ENCODE measurements at regions of chr3 and their contacts with region 1.

Region 1: DNA sequence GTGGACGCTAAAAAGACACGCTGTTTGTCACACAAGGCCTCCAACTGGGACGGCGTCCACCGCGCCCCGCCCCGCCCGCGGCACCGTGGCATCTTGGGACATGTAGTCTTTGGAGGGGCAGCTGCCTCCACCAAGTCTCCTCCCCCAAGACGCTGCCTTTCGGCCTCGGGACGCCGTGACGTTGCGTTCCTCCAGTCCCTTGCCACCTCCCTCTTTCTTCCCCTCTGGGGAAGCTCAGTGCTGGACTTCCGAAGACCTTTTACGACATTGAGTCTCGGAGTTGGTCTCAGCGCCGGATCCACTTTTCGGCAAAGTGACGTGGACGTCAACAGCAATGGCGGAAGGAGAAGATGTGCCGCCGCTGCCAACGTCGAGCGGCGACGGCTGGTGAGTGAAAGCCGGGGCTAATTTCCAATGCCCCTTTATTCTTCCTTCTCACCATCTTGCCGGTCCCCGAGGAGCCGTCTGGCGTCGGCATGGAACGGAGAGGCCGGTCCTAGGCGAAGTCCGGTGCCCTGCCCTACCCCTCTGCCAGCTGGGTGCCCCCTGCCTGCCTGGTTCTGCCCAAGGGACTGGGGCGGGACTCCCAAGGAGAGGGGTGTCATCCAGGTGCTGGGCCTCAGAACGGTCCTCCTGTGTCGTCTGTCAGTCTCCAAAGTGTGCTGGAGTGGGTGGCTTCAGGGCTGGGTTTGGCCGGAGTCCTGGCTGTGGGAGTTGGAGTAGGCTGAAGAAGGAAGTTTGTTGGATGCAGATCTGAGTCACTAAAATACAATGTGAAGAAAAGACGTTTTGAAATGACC is at the start of gene TBC1D23:
- DNase-seq: peak; percentile 94 to 98 (median 97)
- H3K4me3 ChIP-seq: peak within 1 kb of the TSS; percentile 88
- H3K4me3 Mint-ChIP-seq: peak within 1 kb of the TSS; percentile 89 to 96 (median 92)
- H3K27ac ChIP-seq: peak within 1 kb of the TSS; percentile 93
- H3K27ac Mint-ChIP-seq: peak within 1 kb of the TSS; percentile 94 to 100 (median 96)
- H3K4me1 ChIP-seq: peaks cover 26% of the 10 kb centered on the region
- H3K4me1 Mint-ChIP-seq: peaks cover 43 to 66% (median 60%) of the 10 kb centered on the region in 3 donors
- H3K27me3 ChIP-seq: no peaks in the 10 kb centered on the region
- H3K27me3 Mint-ChIP-seq: no peaks in the 10 kb centered on the region
- total RNA-seq, gene TBC1D23: 21.0 to 23.1 TPM

Region 2: GRCh38 chr3:100136921-100137320 is 124.0 kb before region 1 on chr3:
- CTCF ChIA-PET with region 1: no interaction called
- POLR2A ChIA-PET with region 1: no interaction called
- DNase-seq: no peak
- H3K4me3 ChIP-seq: no peak overlapping the region
- H3K4me3 Mint-ChIP-seq: no peak overlapping the region
- H3K27ac ChIP-seq: no peak overlapping the region
- H3K27ac Mint-ChIP-seq: no peak overlapping the region
- H3K4me1 ChIP-seq: no peaks in the 10 kb centered on the region
- H3K4me1 Mint-ChIP-seq: no peaks in the 10 kb centered on the region
- H3K27me3 ChIP-seq: no peaks in the 10 kb centered on the region
- H3K27me3 Mint-ChIP-seq: no peaks in the 10 kb centered on the region

Region 3: GRCh38 chr3:100400780-100401673 is 140.1 kb after region 1 on chr3 and contains the starts of genes LNP1 and TOMM70:
- CTCF ChIA-PET with region 1: no interaction called
- POLR2A ChIA-PET with region 1: interaction called, 10 read pairs
- DNase-seq: peak; percentile 91 to 96 (median 94)
- H3K4me3 ChIP-seq: peak within 1 kb of the TSS; percentile 90
- H3K4me3 Mint-ChIP-seq: peak within 1 kb of the TSS; percentile 95 to 100 (median 96)
- H3K27ac ChIP-seq: peak within 1 kb of the TSS; percentile 87
- H3K27ac Mint-ChIP-seq: peak within 1 kb of the TSS; percentile 90 to 99 (median 96)
- H3K4me1 ChIP-seq: peaks cover 41% of the 10 kb centered on the region
- H3K4me1 Mint-ChIP-seq: peaks cover 55 to 83% (median 73%) of the 10 kb centered on the region in 3 donors
- H3K27me3 ChIP-seq: no peaks in the 10 kb centered on the region
- H3K27me3 Mint-ChIP-seq: no peaks in the 10 kb centered on the region
- total RNA-seq, gene LNP1: 1.5 to 1.6 TPM
- total RNA-seq, gene TOMM70: 63.5 to 64.5 TPM

Measured in CD8-positive, alpha-beta memory T cell (primary cell).